WTC11 (cell line): ENCODE measurements at regions of chr17 and their contacts with region 1.

Region 1: DNA sequence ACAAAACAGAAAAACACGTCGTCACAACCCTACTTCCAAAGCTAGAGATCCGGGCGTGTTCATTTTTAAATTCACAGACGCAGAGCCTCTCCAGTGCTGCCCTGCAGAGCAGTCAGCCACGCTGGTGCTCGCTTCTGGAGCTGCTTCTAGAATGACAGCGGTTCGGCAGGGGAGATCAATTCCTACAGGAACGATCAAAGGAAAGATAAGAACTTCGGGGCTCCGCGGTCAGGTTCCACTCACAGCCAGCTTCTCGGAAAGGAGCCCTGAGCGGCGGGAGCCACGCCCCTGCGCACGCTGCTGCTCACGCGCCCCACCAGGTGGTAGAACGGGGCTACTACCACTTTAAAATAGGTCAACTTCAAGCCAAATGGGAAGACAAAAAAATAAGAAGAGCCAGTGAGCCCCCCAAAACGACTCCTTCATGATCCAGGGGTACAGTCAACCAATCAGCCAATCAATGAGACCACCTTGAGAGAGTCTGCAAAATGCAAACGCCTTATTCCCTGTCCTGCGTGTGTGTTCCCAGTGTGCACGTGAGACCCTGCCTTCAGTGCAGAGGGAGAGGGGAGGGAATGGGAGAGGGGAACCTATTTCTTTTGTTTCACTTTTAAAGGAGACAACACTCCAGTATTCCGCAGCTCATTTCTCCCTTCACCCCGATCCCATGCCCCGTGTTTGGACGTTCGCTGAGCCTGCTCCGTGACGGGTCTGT is 209.7 kb downstream of the RBFOX3 start:
- DNase-seq: peak; percentile 79
- ATAC-seq: peak; percentile 83
- H3K4me3 Mint-ChIP-seq: peak overlapping the region; percentile 71
- H3K27ac Mint-ChIP-seq: no peak overlapping the region
- H3K4me1 Mint-ChIP-seq: peaks cover 20% of the 10 kb centered on the region
- H3K27me3 Mint-ChIP-seq: peaks cover 28% of the 10 kb centered on the region
- CTCF ChIP-seq: peak; percentile 75

Region 2: DNA sequence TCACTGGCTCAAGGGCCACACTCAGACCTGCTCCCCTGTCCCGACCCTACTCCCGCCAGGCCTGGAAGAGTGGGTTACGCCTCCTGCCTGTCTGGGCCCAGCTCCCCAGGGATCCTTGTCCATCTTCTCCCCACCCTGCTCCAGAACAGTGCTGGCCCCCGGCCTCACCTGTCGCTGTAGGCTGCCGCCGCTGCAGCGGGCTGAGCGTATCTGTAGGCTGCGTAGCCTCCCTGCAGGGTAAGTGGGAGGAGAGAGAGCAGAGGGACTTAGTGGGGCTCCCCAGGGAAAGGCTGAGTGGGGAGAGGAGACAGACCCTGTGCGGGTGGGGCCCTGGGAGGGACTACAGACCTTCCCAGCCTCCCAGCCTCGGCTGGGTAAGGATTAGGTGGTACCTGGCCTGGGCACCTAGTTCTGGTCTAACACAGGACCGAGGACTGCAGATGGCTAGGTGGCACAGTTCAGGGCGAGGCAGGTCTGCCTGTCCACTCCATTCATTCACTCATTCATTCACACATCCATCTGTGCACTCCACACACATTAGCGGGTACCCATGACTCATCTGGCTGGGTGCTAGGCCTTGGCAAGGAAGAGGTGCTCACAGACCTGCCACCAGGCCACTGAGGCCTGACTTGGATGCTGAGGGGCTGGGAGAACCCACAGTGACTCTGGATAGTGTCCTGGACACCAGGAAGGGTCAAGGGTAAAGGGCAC is 305.6 kb before region 1 on chr17:
- CTCF ChIA-PET with region 1: interaction called, 20 read pairs
- POLR2A ChIA-PET with region 1: no interaction called
- DNase-seq: no peak
- ATAC-seq: no peak
- H3K4me3 Mint-ChIP-seq: peak overlapping the region; percentile 34; the same call in 1 of the 2 replicates
- H3K27ac Mint-ChIP-seq: no peak overlapping the region
- H3K4me1 Mint-ChIP-seq: peaks cover 7% of the 10 kb centered on the region
- H3K27me3 Mint-ChIP-seq: no peaks in the 10 kb centered on the region; the same call in 1 of the 2 replicates
- CTCF ChIP-seq: no peak

Region 3: GRCh38 chr17:79372470-79373238 is 28.5 kb before region 1 on chr17:
- CTCF ChIA-PET with region 1: interaction called, 17 read pairs
- POLR2A ChIA-PET with region 1: no interaction called
- DNase-seq: no peak
- ATAC-seq: no peak
- H3K4me3 Mint-ChIP-seq: no peak overlapping the region
- H3K27ac Mint-ChIP-seq: no peak overlapping the region; the same call in 1 of the 2 replicates
- H3K4me1 Mint-ChIP-seq: peaks cover 18% of the 10 kb centered on the region
- H3K27me3 Mint-ChIP-seq: no peaks in the 10 kb centered on the region
- CTCF ChIP-seq: no peak

Region 4: GRCh38 chr17:79413611-79414010 is 12.5 kb after region 1 on chr17:
- CTCF ChIA-PET with region 1: interaction called, 28 read pairs
- POLR2A ChIA-PET with region 1: no interaction called
- DNase-seq: no peak
- ATAC-seq: no peak
- H3K4me3 Mint-ChIP-seq: no peak overlapping the region
- H3K27ac Mint-ChIP-seq: no peak overlapping the region
- H3K4me1 Mint-ChIP-seq: peaks cover 8% of the 10 kb centered on the region; the same call in 1 of the 2 replicates
- H3K27me3 Mint-ChIP-seq: no peaks in the 10 kb centered on the region
- CTCF ChIP-seq: no peak

Region 5: GRCh38 chr17:79437856-79438457 is 36.8 kb after region 1 on chr17:
- CTCF ChIA-PET with region 1: interaction called, 11 read pairs
- POLR2A ChIA-PET with region 1: no interaction called
- DNase-seq: no peak
- ATAC-seq: peak; percentile 30; the same call in 1 of the 2 replicates
- H3K4me3 Mint-ChIP-seq: no peak overlapping the region
- H3K27ac Mint-ChIP-seq: no peak overlapping the region
- H3K4me1 Mint-ChIP-seq: no peaks in the 10 kb centered on the region
- H3K27me3 Mint-ChIP-seq: no peaks in the 10 kb centered on the region
- CTCF ChIP-seq: no peak

Region 6: DNA sequence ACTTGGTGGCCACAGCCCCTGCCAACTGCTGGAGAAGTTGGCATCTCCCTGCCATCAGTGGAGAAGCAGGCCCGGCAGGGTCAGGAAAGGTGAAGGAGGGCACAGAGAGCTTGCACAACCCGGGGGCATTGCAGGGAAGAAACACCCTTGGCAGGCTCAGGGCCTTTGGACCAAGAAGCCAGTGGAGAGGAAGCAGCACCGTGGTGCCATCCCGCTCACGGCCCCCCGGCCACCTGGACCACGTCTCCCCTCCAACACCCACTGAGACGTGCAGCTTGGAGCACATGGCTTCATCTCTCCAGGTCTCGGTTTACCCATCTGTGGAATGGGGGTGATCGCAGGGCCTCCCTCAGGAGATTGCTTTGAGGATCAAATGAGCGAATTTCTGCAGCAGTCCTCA is 51.6 kb after region 1 on chr17:
- CTCF ChIA-PET with region 1: no interaction called
- POLR2A ChIA-PET with region 1: no interaction called
- DNase-seq: no peak
- ATAC-seq: no peak
- H3K4me3 Mint-ChIP-seq: no peak overlapping the region
- H3K27ac Mint-ChIP-seq: no peak overlapping the region
- H3K4me1 Mint-ChIP-seq: no peaks in the 10 kb centered on the region
- H3K27me3 Mint-ChIP-seq: no peaks in the 10 kb centered on the region
- CTCF ChIP-seq: no peak

Region 7: GRCh38 chr17:79612468-79613194 is 211.5 kb after region 1 on chr17:
- CTCF ChIA-PET with region 1: interaction called, 31 read pairs
- POLR2A ChIA-PET with region 1: no interaction called
- DNase-seq: peak; percentile 93
- ATAC-seq: peak; percentile 40
- H3K4me3 Mint-ChIP-seq: no peak overlapping the region
- H3K27ac Mint-ChIP-seq: no peak overlapping the region
- H3K4me1 Mint-ChIP-seq: peaks cover 12% of the 10 kb centered on the region
- H3K27me3 Mint-ChIP-seq: peaks cover 61% of the 10 kb centered on the region
- CTCF ChIP-seq: peak; percentile 80

Region 8: DNA sequence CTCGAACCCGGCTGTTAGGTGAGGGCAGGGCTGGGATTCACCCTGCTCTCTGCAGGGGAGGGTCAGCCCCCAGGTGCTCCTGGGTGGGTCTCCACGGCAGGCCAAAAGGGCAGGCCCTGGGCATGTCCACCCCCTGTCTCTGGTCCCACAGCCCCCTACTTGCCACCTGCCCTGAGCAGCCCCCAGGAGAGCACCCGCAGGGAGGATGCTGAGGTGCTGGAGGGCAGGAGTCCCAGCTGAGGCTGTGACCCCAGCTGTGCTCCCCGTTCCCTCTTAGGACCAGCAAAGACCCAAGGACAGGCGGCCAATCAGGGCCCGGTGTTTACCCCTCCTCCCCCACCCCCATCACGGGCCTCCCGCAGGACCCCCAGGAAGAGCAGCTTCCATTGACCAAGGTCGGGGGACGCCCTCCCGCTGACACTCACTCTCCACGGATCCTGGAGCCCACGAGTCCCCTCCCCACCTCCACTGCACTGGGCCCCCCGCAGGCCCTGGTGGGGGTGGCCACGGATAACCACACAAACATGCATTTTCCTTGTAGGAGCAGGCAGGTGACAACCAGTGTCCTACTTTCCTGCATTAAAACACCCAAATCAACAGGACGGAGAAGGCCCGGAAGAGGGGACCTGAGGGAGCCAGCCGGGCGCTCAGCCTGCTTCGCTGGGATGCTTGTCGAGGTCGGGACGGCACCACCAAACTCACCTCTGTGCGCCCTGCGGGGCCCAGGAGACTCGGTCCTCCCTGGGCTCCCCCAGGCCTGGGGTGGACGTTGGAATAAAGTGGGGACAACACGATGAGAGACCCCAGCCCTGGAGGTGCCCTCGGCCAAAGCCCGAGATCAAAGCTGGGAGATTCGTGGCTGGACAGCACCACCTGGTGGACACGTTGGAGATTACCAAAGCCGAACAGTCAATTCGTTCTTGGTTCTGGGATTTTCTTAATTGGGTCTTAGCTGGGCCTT is 307.1 kb after region 1 on chr17:
- CTCF ChIA-PET with region 1: interaction called, 31 read pairs
- POLR2A ChIA-PET with region 1: no interaction called
- DNase-seq: peak; percentile 79
- ATAC-seq: peak; percentile 65
- H3K4me3 Mint-ChIP-seq: peak overlapping the region; percentile 55
- H3K27ac Mint-ChIP-seq: no peak overlapping the region
- H3K4me1 Mint-ChIP-seq: peaks cover 15% of the 10 kb centered on the region
- H3K27me3 Mint-ChIP-seq: no peaks in the 10 kb centered on the region
- CTCF ChIP-seq: peak; percentile 73